ENCODE measurements at regions of chr5 and their contacts with region 1.

Region 1: GRCh38 chr5:128905571-128906110 is 59.6 kb upstream of the SLC27A6 start:
- DNase-seq: peak; percentile 33
- H3K4me3 Mint-ChIP-seq: no peak overlapping the region
- H3K27ac Mint-ChIP-seq: no peak overlapping the region
- H3K4me1 Mint-ChIP-seq: no peaks in the 10 kb centered on the region
- H3K27me3 Mint-ChIP-seq: peaks cover under 1% of the 10 kb centered on the region

Region 2: GRCh38 chr5:128213340-128213739 is 692.3 kb before region 1 on chr5:
- CTCF ChIA-PET with region 1: no interaction called
- POLR2A ChIA-PET with region 1: no interaction called
- intact Hi-C with region 1: loop called (anchors 5 kb)
- DNase-seq: peak; percentile 45
- H3K4me3 Mint-ChIP-seq: no peak overlapping the region
- H3K27ac Mint-ChIP-seq: no peak overlapping the region
- H3K4me1 Mint-ChIP-seq: no peaks in the 10 kb centered on the region
- H3K27me3 Mint-ChIP-seq: peaks cover 4% of the 10 kb centered on the region

Region 3: GRCh38 chr5:128925973-128926372 is 20.3 kb after region 1 on chr5:
- CTCF ChIA-PET with region 1: no interaction called
- POLR2A ChIA-PET with region 1: no interaction called
- intact Hi-C with region 1: no loop called
- DNase-seq: no peak
- H3K4me3 Mint-ChIP-seq: no peak overlapping the region
- H3K27ac Mint-ChIP-seq: no peak overlapping the region
- H3K4me1 Mint-ChIP-seq: no peaks in the 10 kb centered on the region
- H3K27me3 Mint-ChIP-seq: peaks cover 1% of the 10 kb centered on the region

Region 4: DNA sequence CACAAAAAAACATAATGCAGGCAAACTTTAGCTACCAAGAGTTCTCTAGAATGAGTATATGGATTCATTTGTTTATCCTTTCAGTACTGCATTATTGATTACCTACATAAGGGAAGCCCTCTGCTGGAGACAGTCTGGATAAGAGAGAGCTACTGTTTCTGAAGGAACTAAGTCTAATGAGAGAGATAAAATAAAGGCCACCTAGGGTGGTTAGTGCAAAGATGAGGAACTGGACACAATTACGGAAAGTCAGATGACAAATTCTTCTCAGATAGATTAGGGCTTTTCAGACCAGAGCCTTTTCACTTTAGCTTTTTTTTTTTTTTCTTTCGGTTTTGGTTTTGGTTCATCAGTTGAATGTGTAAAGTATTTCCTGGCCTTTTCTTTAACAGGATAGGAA is 220.2 kb after region 1 on chr5:
- CTCF ChIA-PET with region 1: interaction called, 3 read pairs
- POLR2A ChIA-PET with region 1: no interaction called
- intact Hi-C with region 1: loop called (anchors 1 kb)
- DNase-seq: no peak
- H3K4me3 Mint-ChIP-seq: peak overlapping the region; percentile 47
- H3K27ac Mint-ChIP-seq: peak overlapping the region; percentile 55
- H3K4me1 Mint-ChIP-seq: peaks cover 9% of the 10 kb centered on the region
- H3K27me3 Mint-ChIP-seq: no peaks in the 10 kb centered on the region

Region 5: GRCh38 chr5:129271303-129271702 is 365.7 kb after region 1 on chr5:
- CTCF ChIA-PET with region 1: no interaction called
- POLR2A ChIA-PET with region 1: no interaction called
- intact Hi-C with region 1: loop called (anchors 1 kb)
- DNase-seq: no peak
- H3K4me3 Mint-ChIP-seq: no peak overlapping the region
- H3K27ac Mint-ChIP-seq: no peak overlapping the region
- H3K4me1 Mint-ChIP-seq: no peaks in the 10 kb centered on the region
- H3K27me3 Mint-ChIP-seq: no peaks in the 10 kb centered on the region

Region 6: DNA sequence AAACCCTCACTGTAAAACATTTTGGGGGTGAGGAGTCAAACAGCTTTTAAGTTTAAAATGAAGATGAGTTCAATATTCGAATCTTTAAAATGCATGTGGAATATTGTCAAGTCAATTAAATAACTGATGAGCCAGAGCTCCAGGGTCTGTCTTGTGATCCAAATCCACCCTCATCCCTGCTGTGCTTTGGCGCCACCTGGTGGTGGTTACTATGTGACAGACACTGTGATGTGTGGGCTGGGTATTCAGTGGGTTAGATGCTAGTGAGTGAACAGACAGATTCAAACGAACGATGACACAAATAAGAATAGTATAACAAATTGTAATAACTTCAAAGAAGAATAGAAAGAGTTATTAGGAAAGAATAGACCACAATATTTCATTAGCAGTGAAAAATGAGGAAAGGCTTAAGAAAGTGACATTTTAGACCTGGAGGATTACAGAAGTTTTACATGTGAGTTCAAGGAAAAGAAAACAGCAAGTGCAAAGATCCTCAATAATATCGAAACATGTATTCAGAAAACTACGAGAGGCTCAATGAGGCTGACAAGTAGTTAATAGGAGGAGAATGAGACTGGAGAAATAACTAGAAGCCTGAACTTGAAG is 947.2 kb after region 1 on chr5:
- CTCF ChIA-PET with region 1: interaction called, 3 read pairs
- POLR2A ChIA-PET with region 1: no interaction called
- intact Hi-C with region 1: loop called (anchors 5 kb)
- DNase-seq: peak; percentile 80
- H3K4me3 Mint-ChIP-seq: no peak overlapping the region
- H3K27ac Mint-ChIP-seq: no peak overlapping the region
- H3K4me1 Mint-ChIP-seq: peaks cover 2% of the 10 kb centered on the region
- H3K27me3 Mint-ChIP-seq: peaks cover 5% of the 10 kb centered on the region